ENCODE measurements at regions of chr19 and their contacts with region 1.

Region 1: DNA sequence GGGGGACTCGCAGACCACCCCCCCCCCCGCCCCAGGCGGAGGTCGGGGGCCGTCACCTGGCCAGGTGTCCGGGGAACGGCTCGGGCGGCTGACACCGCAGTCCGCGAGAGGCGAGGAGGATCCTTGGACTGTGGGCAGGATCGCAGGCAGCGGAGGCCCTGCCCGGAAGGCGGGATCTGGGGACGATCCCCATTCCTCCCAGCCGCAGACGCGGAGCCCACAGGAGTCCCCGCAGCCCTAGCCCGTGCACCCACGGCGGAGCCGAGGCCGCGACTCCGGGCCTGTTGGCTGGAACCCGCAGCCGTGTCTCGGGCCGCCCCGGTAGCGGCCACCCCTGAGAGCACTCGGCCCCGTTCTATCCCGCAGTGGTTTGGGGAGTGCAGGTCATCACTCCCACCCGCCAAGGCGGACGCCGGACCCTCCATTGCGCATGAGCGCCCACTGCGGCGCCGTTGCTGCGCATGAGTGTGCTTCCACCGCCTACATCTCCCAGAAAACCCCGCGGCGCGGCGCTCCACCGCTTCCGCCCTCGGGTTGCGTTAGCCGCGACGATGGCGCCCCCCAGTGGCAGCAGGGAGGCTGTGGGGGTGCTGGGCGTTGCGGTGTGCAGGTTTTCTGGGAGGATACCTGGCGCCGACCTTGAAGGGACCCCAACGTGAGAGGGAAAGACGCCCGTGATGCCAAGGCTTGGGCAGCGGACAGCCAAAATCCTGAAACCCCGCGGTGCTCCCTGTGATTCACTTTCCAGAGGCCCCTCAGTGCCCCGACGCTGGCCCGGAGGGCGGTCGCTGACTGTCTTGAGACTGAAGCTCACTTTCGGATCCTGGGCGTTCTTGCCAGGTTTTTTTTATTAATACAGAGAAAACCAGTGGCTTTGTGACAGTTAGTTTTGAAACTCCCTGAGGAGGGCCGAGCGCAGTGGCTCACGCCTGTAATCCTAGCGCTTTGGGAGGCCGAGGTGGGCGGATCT is 4.4 kb upstream of the ZNF329 start:
- DNase-seq: peak; percentile 97

Region 2: GRCh38 chr19:57103573-57104277 is 1051.2 kb before region 1 on chr19:
- intact Hi-C with region 1: loop called (anchors 10 kb)
- DNase-seq: no peak

Region 3: GRCh38 chr19:58002384-58003173 is 152.4 kb before region 1 on chr19 and contains the start of gene ZNF606:
- intact Hi-C with region 1: loop called (anchors 5 kb)
- DNase-seq: peak; percentile 95
- total RNA-seq, gene ZNF606: 13.8 TPM

Region 4: DNA sequence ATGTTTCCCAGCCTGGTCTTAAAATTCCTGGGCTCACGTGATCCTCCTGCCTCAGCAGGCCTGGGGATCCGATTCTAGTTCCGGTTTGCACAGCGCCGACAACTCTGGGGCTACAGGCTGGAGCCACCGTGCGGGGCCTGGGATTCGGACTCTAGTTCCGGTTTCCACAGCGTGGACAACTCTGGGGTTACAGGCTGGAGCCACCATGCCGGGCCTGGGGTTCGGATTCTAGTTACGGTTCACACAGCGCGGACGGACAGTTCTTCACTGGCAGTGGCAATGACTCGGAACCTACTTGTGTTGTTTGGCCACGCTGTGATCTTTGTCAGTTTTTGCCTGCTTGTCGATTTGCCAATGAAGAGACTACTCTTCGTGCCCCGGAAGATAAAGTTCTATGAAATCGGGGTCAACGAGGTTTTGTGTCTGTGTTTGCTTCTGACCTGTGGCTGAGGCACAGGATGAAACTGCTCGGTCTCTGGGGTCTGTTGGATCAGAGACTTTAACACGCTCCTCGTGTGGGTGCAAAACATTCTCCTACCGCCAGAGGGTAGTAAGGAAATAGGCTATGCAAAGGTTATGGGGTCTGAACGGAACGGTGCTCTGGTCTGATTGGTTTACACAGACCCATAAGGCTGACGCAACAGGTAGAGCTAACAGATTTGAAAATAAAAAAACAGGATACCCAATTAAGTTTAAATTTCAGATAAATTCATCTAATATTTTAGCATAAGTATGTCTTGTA is 133.3 kb before region 1 on chr19:
- intact Hi-C with region 1: loop called (anchors 2 kb)
- DNase-seq: no peak

Region 5: GRCh38 chr19:58372311-58373133 is 217.6 kb after region 1 on chr19:
- intact Hi-C with region 1: no loop called
- DNase-seq: no peak